ENCODE measurements at regions of chr11 and their contacts with region 1.

Region 1: DNA sequence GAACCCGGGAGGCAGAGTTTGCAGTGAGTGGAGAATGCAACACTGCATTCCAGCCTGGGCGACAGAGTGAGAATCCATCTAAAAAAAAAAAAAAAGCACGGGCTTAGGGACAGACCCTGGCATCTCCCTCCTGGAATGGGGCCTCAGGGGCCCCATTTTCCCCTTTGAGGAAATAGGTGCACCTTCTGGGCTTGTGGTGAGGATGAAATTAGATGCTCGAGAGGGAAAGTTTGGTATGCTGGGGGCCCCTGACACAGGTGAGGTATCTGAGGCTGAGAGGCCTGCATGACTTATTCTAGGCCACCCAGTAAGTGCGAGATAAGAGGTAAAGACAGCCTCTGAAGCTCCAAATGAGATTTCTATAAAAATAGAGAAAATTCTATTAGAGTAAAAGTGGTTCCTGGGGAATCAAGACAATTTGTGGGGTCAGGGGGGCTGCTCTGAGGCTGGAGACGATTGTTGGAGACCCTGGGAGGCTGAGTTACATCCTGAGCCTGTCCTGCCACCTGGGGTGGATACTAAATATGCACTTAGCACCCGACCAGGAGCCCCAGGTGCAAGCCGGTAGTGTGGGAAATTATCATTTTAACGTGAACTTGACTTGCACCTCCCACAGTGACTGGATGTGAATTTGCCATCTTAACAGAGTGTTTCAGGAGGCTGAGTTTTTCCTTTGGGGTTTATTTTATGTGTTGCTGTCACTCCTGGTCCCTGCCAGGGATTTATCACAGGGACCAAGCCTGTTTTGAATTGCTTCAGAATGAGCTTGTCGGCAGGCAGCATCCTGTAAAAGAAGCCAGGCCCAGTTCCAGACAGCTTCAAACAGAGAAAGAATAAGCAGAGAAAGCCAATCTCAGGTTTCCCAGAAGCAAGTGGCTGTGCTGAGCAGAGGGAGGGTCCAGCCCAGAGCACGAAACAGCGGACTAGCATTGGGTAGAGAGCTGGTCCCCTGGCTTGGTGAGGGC is 48.4 kb upstream of the TSKU start:
- DNase-seq: no peak
- H3K4me3 ChIP-seq: no peak overlapping the region
- H3K4me3 Mint-ChIP-seq: no peak overlapping the region
- H3K27ac ChIP-seq: no peak overlapping the region
- H3K27ac Mint-ChIP-seq: peak overlapping the region in 1 of 8 donors; percentile 29
- H3K4me1 ChIP-seq: no peaks in the 10 kb centered on the region
- H3K4me1 Mint-ChIP-seq: no peaks in the 10 kb centered on the region
- H3K27me3 ChIP-seq: no peaks in the 10 kb centered on the region
- H3K27me3 Mint-ChIP-seq: peaks cover 5 to 17% of the 10 kb centered on the region in 2 donors

Region 2: GRCh38 chr11:76799066-76799804 is 64.5 kb after region 1 on chr11:
- CTCF ChIA-PET with region 1: interaction called, 38 read pairs
- POLR2A ChIA-PET with region 1: no interaction called
- DNase-seq: peak; percentile 59 to 83 (median 73)
- H3K4me3 ChIP-seq: peak overlapping the region; percentile 51
- H3K4me3 Mint-ChIP-seq: peak overlapping the region in 6 of 7 donors; percentile 38 to 84 (median 52)
- H3K27ac ChIP-seq: no peak overlapping the region
- H3K27ac Mint-ChIP-seq: peak overlapping the region in 2 of 8 donors; percentile 46 to 58
- H3K4me1 ChIP-seq: peaks cover 11% of the 10 kb centered on the region
- H3K4me1 Mint-ChIP-seq: peaks cover 6 to 22% (median 7%) of the 10 kb centered on the region in 3 donors
- H3K27me3 ChIP-seq: no peaks in the 10 kb centered on the region
- H3K27me3 Mint-ChIP-seq: peaks cover 8 to 13% of the 10 kb centered on the region in 2 donors

Measured in CD8-positive, alpha-beta memory T cell (primary cell).